Ascending aorta (tissue), 2 donors: ENCODE measurements at regions of chrX and their contacts with region 1.

Region 1: GRCh38 chrX:110317820-110318658 is at the start of gene AMMECR1:
- DNase-seq: peak; percentile 29 to 86
- H3K4me3 ChIP-seq: peak within 1 kb of the TSS; percentile 60 to 93
- H3K27ac ChIP-seq: peak within 1 kb of the TSS; percentile 69 to 81
- H3K4me1 ChIP-seq: no peaks in the 10 kb centered on the region
- H3K27me3 ChIP-seq: no peaks in the 10 kb centered on the region
- CTCF ChIP-seq: no peak
- total RNA-seq, gene AMMECR1: 3.5 TPM

Region 2: DNA sequence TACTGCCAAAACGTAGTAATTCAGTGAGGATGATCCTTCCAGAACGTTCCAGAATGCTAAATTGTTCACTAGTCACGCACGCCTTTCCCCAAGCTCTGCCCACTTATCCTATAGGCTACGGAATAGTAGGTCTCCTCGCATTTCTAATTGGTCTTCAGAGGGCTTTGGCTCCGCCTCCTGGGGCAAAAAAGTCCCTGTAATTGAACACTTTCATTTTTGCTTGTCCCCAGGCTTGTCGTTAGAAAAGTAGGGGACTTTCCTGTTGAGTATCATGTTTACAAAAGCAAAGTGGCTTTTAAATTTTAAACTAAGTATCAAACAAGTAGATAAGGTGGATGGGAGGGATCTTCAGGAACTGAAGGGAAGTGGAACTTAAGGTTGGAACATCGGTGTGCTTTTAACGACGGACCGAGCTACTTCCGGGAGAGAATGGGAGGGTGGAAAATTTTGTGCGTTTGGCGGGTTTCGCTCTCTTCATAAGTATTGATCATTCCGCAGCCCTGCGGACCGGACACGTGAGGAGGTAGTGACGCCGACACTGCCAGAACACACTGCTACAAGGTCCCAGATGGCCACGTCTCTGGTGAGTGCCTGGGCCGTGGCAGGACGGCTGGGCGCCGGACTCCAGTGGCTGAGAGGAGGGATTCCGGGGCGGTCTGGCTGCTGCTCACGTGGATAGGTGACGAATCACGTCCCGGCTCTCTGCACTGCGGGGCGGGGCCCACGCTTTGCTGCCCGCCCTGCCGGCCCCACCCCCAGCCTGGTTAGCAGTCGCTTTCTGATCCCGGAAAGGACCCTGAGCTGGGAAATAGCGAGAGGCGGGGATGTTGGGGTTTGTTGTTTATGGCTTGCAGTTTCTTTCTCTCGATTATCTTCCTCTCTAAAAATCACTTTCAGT is 781.4 kb before region 1 on chrX and contains the start of gene NXT2:
- intact Hi-C with region 1: loop called (anchors 10 kb)
- DNase-seq: peak; percentile 67 to 93
- H3K4me3 ChIP-seq: peak within 1 kb of the TSS; percentile 55 to 66
- H3K27ac ChIP-seq: peak within 1 kb of the TSS; percentile 86 to 89
- H3K4me1 ChIP-seq: no peaks in the 10 kb centered on the region
- H3K27me3 ChIP-seq: no peaks in the 10 kb centered on the region
- CTCF ChIP-seq: no peak
- total RNA-seq, gene NXT2: 1.8 TPM

Region 3: DNA sequence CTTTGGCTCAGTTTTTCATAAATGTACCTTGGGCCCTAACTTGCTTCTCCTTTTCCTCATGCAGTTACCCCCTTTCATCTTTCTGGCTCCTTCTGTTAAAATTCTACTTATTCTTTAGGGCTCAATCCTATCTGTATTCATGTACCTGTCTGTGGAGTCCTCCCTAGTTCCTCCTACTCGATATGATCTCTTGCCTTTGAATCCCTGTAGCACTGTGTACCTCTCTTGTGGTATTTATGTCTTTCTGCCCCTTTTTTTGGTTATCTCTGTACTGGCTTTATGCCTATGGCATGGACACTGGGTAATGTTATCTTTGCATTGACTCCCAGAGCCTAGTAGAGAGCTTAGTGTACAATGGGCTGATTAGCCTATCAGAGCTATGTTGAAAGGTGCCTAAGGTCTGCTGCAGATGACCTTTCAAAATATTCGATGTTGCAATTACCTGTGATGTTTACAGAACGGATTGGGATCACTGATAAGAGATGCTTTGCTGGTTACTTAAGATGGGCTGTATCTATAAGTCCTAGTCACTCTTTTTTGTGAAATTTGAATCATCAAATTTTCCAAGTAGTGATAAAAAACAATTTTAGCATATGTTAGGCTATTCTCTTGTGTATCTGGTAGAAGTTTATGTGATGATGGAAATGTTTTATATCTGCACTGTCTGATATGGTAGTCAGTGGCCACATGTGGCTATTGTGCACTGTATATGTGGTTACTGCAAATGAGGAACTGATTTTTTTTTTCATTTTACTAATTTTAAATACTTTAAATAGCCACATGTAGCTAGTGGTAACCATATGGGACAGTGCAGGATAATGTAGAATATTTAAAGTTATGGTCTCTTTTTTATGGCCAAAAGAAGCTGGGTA is 281.6 kb before region 1 on chrX:
- intact Hi-C with region 1: no loop called
- DNase-seq: no peak
- H3K4me3 ChIP-seq: no peak overlapping the region
- H3K27ac ChIP-seq: no peak overlapping the region
- H3K4me1 ChIP-seq: no peaks in the 10 kb centered on the region
- H3K27me3 ChIP-seq: no peaks in the 10 kb centered on the region
- CTCF ChIP-seq: no peak

Region 4: GRCh38 chrX:110163488-110163887 is 154.6 kb before region 1 on chrX:
- intact Hi-C with region 1: loop called (anchors 5 kb)
- DNase-seq: no peak
- H3K4me3 ChIP-seq: no peak overlapping the region
- H3K27ac ChIP-seq: no peak overlapping the region
- H3K4me1 ChIP-seq: peaks cover 0 to 2% of the 10 kb centered on the region in 2 donors
- H3K27me3 ChIP-seq: no peaks in the 10 kb centered on the region
- CTCF ChIP-seq: no peak

Region 5: GRCh38 chrX:110412971-110413721 is 95.1 kb after region 1 on chrX:
- intact Hi-C with region 1: loop called (anchors 5 kb)
- DNase-seq: peak in 1 of 2 donors; percentile 77
- H3K4me3 ChIP-seq: no peak overlapping the region
- H3K27ac ChIP-seq: peak overlapping the region; percentile 48 to 71
- H3K4me1 ChIP-seq: peaks cover 0 to 7% of the 10 kb centered on the region in 2 donors
- H3K27me3 ChIP-seq: no peaks in the 10 kb centered on the region
- CTCF ChIP-seq: peak; percentile 74 to 88 (median 79)

Region 6: GRCh38 chrX:110795645-110796406 is 477.8 kb after region 1 on chrX and contains the start of gene CHRDL1:
- intact Hi-C with region 1: no loop called
- DNase-seq: no peak
- H3K4me3 ChIP-seq: peak within 1 kb of the TSS; percentile 30 to 52
- H3K27ac ChIP-seq: no peak within 1 kb of the TSS
- H3K4me1 ChIP-seq: no peaks in the 10 kb centered on the region
- H3K27me3 ChIP-seq: no peaks in the 10 kb centered on the region
- CTCF ChIP-seq: no peak
- total RNA-seq, gene CHRDL1: 43.5 TPM